Esophagus muscularis mucosa (tissue), 4 donors: ENCODE measurements at regions of chr11 and their contacts with region 1.

Region 1: DNA sequence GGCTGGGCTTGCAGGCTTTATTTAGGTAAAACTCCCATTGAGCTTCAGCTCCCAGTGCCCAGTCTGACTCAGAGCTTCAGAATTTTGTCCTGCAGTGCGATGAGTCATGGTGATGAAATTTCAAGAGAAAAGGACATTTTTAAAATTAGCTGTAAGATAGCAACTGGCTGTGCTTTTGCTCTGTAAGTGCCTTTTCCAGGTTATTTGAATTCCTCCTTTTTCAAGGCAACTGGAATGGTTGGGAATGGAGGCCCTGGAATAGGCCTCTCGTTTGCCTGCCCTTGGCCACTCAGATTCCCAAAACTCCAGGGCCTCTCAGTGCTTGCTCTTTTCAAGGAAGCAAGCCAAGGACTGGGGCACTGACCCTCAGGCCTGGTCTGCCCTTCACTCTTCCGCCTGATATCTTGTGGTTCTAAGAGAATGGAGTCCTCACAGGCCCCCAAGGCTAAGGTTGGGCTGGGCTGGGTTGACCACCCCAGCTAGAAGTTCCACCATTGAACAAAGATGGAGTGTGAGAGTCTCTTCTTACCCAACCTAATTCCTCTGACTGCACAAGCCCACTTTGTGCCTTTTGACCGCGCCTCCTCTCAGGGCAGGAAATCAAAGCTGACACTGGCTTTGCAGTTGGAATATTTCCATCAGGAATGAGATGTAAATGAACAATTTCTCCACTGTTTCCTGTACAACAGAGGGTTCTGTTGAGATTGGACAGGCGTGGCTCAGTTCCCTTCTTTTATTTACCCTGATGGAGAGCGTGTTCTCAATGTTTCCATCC is 59.4 kb upstream of the PRSS23 start:
- DNase-seq: no peak
- H3K4me3 ChIP-seq: no peak overlapping the region
- H3K27ac ChIP-seq: peak overlapping the region; percentile 91 to 94 (median 92)
- H3K4me1 ChIP-seq: peaks cover 44 to 83% (median 77%) of the 10 kb centered on the region in 4 donors
- H3K27me3 ChIP-seq: no peaks in the 10 kb centered on the region
- CTCF ChIP-seq: no peak
- EP300 ChIP-seq: no peak
- POLR2A ChIP-seq: no peak

Region 2: GRCh38 chr11:86571273-86571948 is 169.5 kb before region 1 on chr11:
- intact Hi-C with region 1: no loop called
- DNase-seq: peak; percentile 47
- H3K4me3 ChIP-seq: no peak overlapping the region
- H3K27ac ChIP-seq: no peak overlapping the region
- H3K4me1 ChIP-seq: peaks cover 11 to 32% (median 22%) of the 10 kb centered on the region in 4 donors
- H3K27me3 ChIP-seq: no peaks in the 10 kb centered on the region
- CTCF ChIP-seq: peak in 1 of 3 experiments; percentile 14
- EP300 ChIP-seq: no peak
- POLR2A ChIP-seq: no peak

Region 3: DNA sequence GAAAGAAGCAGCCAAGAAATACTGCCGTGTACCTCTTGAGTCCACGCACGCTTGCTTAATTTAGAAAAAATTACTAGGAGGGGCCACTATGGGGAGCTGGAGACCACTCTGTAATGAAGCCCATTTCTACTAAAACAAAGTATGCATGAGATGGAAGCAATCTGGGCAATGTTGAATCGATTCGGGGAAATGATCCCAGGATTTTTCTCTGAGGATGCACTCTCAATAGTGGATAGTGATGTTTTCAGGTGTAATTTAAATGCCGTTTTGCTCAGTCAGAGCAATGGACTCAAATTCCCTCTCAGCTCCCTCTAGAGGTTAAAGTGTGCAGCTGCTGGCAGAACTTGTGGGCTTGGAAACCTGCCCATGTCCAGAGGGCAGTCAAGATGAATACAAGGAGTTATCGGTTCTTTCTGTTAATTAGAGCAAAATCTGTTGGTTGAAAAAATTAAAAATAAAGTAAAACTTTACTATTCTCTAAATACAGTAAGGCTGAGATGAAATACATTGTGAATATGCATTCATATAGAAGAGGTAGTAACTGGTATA is 132.6 kb before region 1 on chr11:
- intact Hi-C with region 1: no loop called
- DNase-seq: peak; percentile 92
- H3K4me3 ChIP-seq: peak overlapping the region in 3 of 4 donors; percentile 21 to 33 (median 25)
- H3K27ac ChIP-seq: peak overlapping the region; percentile 1 to 69 (median 30)
- H3K4me1 ChIP-seq: peaks cover 25 to 48% (median 40%) of the 10 kb centered on the region in 4 donors
- H3K27me3 ChIP-seq: no peaks in the 10 kb centered on the region
- CTCF ChIP-seq: peak; percentile 87 to 92 (median 91)
- EP300 ChIP-seq: no peak
- POLR2A ChIP-seq: no peak

Region 4: DNA sequence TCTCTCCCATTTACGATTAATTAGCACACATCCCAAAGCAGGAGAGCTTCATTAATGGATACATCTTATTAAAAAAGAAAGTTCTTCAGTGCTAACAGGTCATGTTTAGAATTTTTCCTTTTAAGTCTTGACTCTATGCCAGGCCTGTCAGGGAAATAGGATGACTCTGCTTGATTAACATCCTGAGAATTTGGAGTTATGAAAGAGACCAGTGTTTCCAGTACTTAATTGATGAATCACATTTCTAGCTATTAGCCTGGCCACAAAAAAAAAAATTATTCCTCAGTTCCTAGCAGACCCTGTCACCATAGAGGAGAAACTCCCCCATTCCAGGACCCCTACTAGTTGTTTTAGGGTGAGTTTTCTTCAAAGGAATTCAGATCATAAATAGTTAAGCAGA is 44.9 kb before region 1 on chr11:
- intact Hi-C with region 1: loop called (anchors 5 kb)
- DNase-seq: no peak
- H3K4me3 ChIP-seq: peak overlapping the region in 1 of 4 donors; percentile 4
- H3K27ac ChIP-seq: peak overlapping the region; percentile 37 to 77 (median 68)
- H3K4me1 ChIP-seq: peaks cover 15 to 53% (median 43%) of the 10 kb centered on the region in 4 donors
- H3K27me3 ChIP-seq: no peaks in the 10 kb centered on the region
- CTCF ChIP-seq: no peak
- EP300 ChIP-seq: peak; percentile 8
- POLR2A ChIP-seq: no peak

Region 5: GRCh38 chr11:86869966-86870570 is 129.2 kb after region 1 on chr11:
- intact Hi-C with region 1: no loop called
- DNase-seq: no peak
- H3K4me3 ChIP-seq: no peak overlapping the region
- H3K27ac ChIP-seq: no peak overlapping the region
- H3K4me1 ChIP-seq: peaks cover 0 to 10% (median 0%) of the 10 kb centered on the region in 4 donors
- H3K27me3 ChIP-seq: no peaks in the 10 kb centered on the region
- CTCF ChIP-seq: peak; percentile 76 to 85 (median 79)
- EP300 ChIP-seq: no peak
- POLR2A ChIP-seq: no peak